GM18951 (cell line): ENCODE measurements at regions of chr14 and their contacts with region 1.

Region 1: DNA sequence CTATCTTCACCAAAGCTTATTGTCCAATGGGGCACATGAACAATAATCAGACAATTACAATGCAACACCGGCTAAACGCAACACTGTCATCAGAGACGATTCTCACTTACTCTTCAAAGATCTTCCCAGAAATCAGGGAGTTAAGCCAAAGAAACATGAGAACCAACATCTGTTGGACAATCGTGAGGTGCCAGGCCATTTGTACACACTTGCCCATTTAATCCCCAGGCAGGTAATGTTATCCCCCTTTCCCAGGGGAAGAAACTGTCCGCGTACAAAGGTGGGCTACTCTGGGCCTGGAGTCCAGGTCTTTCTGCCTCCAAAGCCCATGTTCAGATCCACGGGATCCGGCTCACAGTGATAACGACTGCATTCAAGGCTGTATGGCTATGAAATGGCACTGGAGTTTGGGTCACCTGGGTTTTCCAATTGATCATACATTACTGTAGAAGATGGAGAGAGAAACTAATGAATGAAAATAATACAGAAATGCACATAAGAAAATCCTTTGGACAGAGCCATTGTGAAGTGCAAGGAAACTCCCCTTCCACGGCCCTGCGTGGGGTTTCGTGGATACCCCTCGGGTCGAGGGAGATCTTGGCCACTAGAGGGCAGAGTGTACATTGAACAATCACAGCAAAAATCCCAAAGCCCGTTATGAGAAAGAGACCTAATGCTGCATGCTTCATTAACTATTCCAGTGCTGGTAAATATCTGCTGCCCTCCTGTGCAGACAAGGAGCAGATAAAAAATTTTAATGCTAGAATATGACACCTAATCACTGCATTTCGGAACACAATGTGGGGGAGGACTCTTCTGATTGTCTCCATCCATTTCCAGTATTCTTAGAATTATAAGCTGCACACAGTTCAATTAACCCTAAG is 111.4 kb downstream of the EGLN3 start:
- POLR2A ChIP-seq: no peak

Region 2: DNA sequence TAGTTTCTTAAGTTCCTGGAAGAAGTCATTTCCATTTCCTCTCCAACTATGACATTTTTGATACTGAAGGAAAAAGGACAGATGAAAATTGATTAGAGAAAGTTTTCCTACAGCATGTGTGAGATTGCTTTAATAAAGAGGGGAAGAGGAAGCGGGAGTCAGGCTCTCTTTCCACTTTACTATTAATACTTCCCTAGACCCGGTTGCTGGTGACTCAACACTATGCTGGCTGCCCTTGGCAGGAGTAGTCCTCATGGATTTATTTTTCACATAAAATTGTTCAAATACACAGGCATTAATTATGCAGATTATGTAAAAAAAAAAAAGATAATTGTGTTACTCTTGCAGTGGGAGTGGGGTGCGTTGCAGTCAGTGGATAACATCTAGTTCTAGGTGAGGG is 182.0 kb before region 1 on chr14:
- in situ Hi-C with region 1: no loop called
- POLR2A ChIP-seq: no peak

Region 3: DNA sequence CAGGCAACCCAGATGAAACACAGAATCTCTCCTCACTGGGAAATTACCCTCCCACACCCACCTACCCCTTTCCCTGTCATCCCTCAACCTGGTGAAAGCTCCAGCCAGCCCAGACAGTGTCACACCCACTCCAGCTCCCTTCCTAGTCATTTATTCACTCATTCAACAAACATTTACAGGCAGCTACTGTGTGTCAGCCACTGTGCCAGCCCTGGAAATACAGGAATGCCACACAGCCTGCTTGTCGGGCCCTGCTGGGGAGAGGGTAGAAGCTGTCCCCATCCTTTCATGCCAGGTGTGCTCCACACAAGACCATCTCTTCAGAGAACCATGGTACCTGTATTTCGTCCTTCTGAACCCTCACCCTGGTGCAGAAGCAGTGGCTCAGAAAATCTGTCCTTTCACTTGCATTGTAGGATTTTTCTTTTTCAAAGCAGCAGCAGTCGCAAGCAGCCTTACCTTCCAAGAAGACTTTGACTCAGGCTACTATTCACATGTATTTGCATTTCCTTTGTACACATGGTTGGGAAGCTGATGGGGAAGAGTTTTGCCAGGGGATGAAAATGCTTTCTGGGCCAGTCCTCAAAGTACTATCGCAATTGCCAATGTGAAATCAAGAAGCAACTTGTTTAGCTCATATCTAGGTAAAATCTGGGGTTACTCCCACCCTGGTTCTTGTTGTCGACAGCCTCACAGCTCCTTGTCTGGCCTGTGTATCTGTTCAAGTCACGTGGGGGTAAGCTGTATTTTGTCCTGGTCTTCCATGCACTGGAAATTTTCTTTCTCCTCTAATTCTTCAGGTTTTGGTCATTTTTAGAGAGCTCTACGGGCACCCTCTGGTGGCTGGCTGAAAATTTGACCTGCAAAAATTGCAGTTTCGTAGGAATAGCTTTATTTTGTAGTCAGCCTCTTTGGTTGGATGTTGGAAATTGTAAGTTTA is 258.9 kb after region 1 on chr14:
- in situ Hi-C with region 1: loop called (anchors 5 kb)
- POLR2A ChIP-seq: no peak

Region 4: DNA sequence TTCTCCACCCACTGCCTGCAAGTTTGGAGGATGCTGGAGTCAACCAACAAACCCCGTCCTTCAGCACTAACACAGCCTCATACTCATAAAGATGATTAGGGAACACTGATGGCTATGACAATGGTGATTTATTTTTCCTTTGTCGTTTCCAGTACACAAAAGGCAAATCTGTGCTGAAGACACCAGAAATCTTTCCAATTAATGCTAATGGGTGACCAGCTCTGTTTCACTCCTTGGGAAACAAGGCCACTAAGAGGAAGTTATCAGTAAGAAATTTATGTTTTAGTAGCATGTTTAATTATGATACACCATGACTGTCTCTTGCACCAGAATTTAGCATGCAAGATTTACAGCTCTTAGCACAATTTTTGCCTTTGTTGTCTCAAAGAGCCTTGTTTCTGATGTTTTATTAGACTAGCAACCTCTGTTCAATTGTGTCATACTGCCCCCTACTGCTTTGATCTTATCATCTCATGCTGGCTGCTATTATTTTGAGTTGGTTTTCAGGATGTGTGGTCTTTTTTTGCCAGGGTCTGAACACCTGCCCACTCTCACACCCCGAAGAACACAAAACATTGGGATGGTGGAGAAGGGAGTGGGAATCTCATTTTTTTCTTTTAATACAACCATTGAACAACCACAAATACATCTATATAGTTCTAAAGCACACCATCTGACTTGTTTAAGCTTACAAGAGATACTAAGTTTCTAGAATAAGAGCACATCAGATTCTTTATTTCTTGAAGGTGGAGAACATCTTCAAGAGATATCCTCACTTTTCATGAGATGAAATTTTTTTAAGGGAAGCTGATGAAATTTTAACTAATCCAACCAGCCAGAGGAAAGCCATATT is 461.7 kb after region 1 on chr14:
- in situ Hi-C with region 1: loop called (anchors 10 kb)
- POLR2A ChIP-seq: no peak